ENCODE measurements at regions of chr16 and their contacts with region 1.

Region 1: GRCh38 chr16:87877938-87878507 is 8.7 kb upstream of the SLC7A5 start:
- DNase-seq: no peak
- H3K4me3 ChIP-seq: no peak overlapping the region
- H3K27ac ChIP-seq: no peak overlapping the region
- H3K4me1 ChIP-seq: peaks cover 10% of the 10 kb centered on the region
- H3K27me3 ChIP-seq: no peaks in the 10 kb centered on the region
- CTCF ChIP-seq: 0 out of 2 replicates have a peak, but pooled peaks have one; percentile 29

Region 2: DNA sequence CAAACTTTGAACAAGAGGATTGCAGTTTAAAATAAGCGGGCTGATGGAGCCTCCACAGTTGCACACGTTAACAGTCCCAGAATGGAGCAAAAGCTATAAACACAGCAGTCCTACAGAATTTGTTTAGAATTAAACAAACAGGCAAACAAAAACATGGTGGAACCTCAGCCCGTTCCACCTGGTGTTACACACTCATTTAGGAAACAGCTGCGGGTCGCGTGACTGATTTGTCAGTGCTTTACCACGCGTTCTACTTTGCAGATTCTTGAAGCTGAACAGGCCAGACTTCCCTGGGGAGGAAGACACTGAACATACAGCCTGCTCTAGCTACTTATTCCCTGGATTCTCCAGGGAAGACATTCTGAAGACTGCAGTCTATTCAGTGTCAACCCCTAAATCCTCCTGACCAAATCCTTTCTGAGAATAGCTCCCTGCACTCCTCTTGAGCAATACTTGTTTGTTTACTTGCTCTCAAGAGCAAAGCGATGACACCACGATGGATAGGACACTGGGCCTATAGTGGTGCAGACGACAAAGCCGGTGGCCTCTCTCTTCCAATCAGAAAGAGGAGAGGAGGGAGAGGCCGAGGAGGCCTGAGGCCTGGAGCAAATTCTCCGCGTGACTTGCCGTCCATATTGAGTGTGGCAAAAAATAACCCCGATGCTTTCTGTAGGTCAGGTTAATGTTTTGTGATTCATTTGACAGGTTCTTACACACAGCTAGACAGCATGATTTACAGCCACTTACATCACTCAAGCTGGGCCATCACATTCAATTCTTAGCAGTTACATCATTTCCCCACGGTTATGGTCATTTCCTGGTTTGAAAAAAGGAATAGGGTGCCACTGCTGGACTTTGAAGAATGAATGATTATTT is 489.8 kb before region 1 on chr16:
- CTCF ChIA-PET with region 1: no interaction called
- POLR2A ChIA-PET with region 1: interaction called, 13 read pairs
- intact Hi-C with region 1: no loop called
- DNase-seq: peak; percentile 98
- H3K4me3 ChIP-seq: peak overlapping the region; percentile 15
- H3K27ac ChIP-seq: peak overlapping the region; percentile 87
- H3K4me1 ChIP-seq: peaks cover 31% of the 10 kb centered on the region
- H3K27me3 ChIP-seq: no peaks in the 10 kb centered on the region
- CTCF ChIP-seq: no peak

Region 3: DNA sequence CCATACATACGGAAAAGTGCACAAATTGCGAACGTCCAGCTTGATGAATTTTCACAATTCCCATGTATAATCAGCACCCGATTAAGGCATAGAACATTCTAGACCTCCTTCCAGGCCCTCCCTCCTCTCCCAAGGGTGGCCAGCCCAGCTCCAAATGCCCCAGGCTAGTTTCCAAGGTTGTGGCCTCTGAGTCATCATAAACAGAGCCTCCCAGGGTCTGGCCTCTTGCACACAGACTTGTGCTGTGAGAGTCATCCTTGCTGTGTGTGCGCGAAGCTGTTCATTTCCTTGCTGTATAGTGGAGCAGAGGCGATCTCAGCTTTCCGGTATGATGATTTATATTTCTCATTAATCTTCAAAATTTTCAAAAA is 296.2 kb before region 1 on chr16:
- CTCF ChIA-PET with region 1: no interaction called
- POLR2A ChIA-PET with region 1: no interaction called
- intact Hi-C with region 1: loop called (anchors 10 kb)
- DNase-seq: no peak
- H3K4me3 ChIP-seq: no peak overlapping the region
- H3K27ac ChIP-seq: no peak overlapping the region
- H3K4me1 ChIP-seq: peaks cover 5% of the 10 kb centered on the region
- H3K27me3 ChIP-seq: no peaks in the 10 kb centered on the region
- CTCF ChIP-seq: no peak